Right lobe of liver (tissue), 6 donors: ENCODE measurements at regions of chr20 and their contacts with region 1.

Region 1: GRCh38 chr20:47272893-47273590 is 83.5 kb downstream of the ZMYND8 start:
- DNase-seq: peak in 1 of 3 donors; percentile 56
- ATAC-seq: peak; percentile 84 to 95 (median 90)
- H3K4me3 ChIP-seq: no peak overlapping the region
- H3K27ac ChIP-seq: peak overlapping the region in 1 of 3 donors; percentile 41
- H3K4me1 ChIP-seq: peaks cover 0 to 11% (median 2%) of the 10 kb centered on the region in 4 donors
- H3K27me3 ChIP-seq: no peaks in the 10 kb centered on the region
- CTCF ChIP-seq: peak; percentile 85 to 96 (median 86)
- POLR2A ChIP-seq: no peak

Region 2: DNA sequence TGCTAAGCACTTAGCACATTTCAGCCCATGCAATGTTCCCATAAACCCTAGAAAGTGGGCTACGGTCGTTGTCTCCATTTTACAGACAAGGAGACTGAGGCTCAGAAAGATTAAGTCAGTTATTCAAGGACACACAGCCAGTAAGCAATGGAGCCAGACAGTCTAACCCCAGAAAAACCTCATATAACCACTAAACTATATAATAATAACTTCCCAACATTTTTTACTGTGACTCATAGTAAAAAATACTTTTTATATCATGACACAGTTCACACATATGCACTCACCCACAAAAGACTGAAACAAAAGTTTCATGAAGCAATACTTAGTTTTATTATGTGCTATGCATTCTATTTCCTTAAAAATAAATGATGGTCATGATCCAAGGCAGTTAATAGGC is 444.6 kb before region 1 on chr20:
- intact Hi-C with region 1: no loop called
- DNase-seq: no peak
- ATAC-seq: no peak
- H3K4me3 ChIP-seq: no peak overlapping the region
- H3K27ac ChIP-seq: no peak overlapping the region
- H3K4me1 ChIP-seq: peaks cover 0 to 8% (median 5%) of the 10 kb centered on the region in 4 donors
- H3K27me3 ChIP-seq: no peaks in the 10 kb centered on the region
- CTCF ChIP-seq: no peak
- POLR2A ChIP-seq: no peak

Region 3: GRCh38 chr20:47379433-47380150 is 106.5 kb after region 1 on chr20:
- intact Hi-C with region 1: loop called (anchors 5 to 10 kb)
- DNase-seq: no peak
- ATAC-seq: no peak
- H3K4me3 ChIP-seq: no peak overlapping the region
- H3K27ac ChIP-seq: no peak overlapping the region
- H3K4me1 ChIP-seq: peaks cover 0 to 3% (median 0%) of the 10 kb centered on the region in 4 donors
- H3K27me3 ChIP-seq: no peaks in the 10 kb centered on the region
- CTCF ChIP-seq: no peak
- POLR2A ChIP-seq: no peak